Activated naive CD4-positive, alpha-beta T cell treated with anti-CD3 and anti-CD28 coated beads for 36 hours (primary cell): ENCODE measurements at regions of chr22 and their contacts with region 1.

Region 1: DNA sequence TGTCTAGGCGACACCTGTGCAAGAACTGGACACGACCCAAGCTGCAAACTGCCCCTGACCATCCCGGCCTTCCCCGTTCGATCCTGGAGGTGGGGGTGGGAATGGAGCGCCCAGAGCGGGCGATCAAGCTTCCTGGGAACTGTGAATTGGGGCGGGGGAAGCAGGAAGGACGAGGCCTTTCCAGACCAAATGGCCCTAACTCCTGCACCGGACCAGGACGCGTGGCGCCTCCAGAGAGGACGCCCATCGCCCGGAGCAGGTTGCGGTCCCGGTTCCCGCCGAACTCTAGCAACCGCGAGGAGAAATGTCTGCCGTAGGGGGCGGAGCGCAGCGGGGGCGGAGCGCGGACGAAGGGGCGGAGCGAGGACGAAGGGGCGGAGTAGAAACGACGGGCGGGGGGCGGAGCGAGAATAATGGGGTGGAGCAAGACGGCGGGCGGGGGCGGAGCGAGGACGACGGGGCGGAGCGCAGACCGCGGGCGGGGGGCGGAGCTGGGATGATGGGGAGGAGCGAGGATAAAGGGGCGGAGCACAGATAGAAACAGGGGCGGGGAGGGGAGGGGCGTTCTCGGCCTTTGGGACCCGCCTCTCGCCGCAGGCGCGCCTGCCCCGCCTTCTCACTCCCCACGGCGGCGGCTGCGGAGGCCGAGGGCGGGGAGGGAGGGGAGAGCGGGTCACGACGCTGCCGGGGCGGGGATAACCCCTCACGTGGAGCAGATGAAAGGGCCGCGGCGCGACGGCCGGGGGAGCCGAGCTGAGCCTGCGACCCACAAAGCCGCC is at the start of gene ZNRF3:
- DNase-seq: peak; percentile 92
- H3K4me3 Mint-ChIP-seq: peak within 1 kb of the TSS; percentile 81
- H3K27ac Mint-ChIP-seq: no peak within 1 kb of the TSS
- H3K4me1 Mint-ChIP-seq: peaks cover 19% of the 10 kb centered on the region
- H3K27me3 Mint-ChIP-seq: peaks cover 17% of the 10 kb centered on the region
- total RNA-seq, gene ZNRF3: 1.6 to 2.2 TPM

Region 2: GRCh38 chr22:28810821-28811491 is 72.1 kb before region 1 on chr22:
- CTCF ChIA-PET with region 1: no interaction called
- intact Hi-C with region 1: loop called (anchors 5 kb)
- DNase-seq: peak; percentile 66
- H3K4me3 Mint-ChIP-seq: peak overlapping the region; percentile 54
- H3K27ac Mint-ChIP-seq: peak overlapping the region; percentile 53
- H3K4me1 Mint-ChIP-seq: peaks cover 61% of the 10 kb centered on the region
- H3K27me3 Mint-ChIP-seq: no peaks in the 10 kb centered on the region

Region 3: GRCh38 chr22:28855355-28856094 is 27.5 kb before region 1 on chr22:
- CTCF ChIA-PET with region 1: no interaction called
- intact Hi-C with region 1: no loop called
- DNase-seq: peak; percentile 64
- H3K4me3 Mint-ChIP-seq: no peak overlapping the region
- H3K27ac Mint-ChIP-seq: no peak overlapping the region
- H3K4me1 Mint-ChIP-seq: no peaks in the 10 kb centered on the region
- H3K27me3 Mint-ChIP-seq: peaks cover 2% of the 10 kb centered on the region

Region 4: GRCh38 chr22:28907311-28908008 is 24.4 kb after region 1 on chr22:
- CTCF ChIA-PET with region 1: interaction called, 3 read pairs
- intact Hi-C with region 1: loop called (anchors 1 kb)
- DNase-seq: peak; percentile 83
- H3K4me3 Mint-ChIP-seq: no peak overlapping the region
- H3K27ac Mint-ChIP-seq: peak overlapping the region; percentile 86
- H3K4me1 Mint-ChIP-seq: peaks cover 46% of the 10 kb centered on the region
- H3K27me3 Mint-ChIP-seq: peaks cover 27% of the 10 kb centered on the region

Region 5: DNA sequence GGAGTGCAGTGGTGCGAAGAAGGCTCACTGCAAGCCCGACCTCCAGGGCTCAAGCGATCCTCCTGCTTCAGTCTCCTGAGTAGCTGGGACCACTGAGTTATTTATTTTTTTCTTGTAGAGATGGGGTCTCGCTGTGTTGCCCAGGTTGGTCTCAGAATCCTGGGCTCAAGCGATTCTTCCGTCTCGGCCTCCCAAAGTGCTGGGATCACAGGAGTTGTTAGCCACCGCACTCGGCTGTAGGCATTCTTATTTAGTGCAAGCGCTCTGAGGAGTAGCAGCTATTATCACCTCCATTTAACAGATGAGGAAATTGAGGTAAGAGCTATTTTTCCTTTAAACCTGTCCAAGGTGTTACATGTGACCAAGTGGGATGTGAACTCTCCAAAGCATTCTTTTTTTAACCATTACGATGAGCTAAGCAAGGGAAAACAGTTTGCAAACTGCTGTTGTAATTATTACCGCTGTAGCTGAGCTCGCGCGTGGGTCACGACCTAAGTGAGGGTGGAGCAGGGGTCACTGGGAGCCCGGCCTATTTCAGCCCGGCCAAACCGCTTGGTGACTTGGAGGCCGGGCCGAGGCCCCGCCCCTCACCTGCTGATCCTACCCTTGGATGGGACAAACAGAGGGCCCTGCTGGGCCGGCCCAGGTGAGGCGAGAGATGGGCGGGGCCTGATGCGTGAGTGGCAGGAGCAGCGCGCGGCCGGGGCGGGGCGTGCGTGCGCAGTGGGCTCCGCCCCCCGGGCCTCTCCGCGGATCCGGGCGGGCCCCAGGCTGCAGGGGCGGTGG is 189.3 kb after region 1 on chr22:
- CTCF ChIA-PET with region 1: no interaction called
- intact Hi-C with region 1: loop called (anchors 1 kb)
- DNase-seq: peak; percentile 87
- H3K4me3 Mint-ChIP-seq: peak overlapping the region; percentile 65
- H3K27ac Mint-ChIP-seq: no peak overlapping the region
- H3K4me1 Mint-ChIP-seq: peaks cover 20% of the 10 kb centered on the region
- H3K27me3 Mint-ChIP-seq: peaks cover 49% of the 10 kb centered on the region

Region 6: DNA sequence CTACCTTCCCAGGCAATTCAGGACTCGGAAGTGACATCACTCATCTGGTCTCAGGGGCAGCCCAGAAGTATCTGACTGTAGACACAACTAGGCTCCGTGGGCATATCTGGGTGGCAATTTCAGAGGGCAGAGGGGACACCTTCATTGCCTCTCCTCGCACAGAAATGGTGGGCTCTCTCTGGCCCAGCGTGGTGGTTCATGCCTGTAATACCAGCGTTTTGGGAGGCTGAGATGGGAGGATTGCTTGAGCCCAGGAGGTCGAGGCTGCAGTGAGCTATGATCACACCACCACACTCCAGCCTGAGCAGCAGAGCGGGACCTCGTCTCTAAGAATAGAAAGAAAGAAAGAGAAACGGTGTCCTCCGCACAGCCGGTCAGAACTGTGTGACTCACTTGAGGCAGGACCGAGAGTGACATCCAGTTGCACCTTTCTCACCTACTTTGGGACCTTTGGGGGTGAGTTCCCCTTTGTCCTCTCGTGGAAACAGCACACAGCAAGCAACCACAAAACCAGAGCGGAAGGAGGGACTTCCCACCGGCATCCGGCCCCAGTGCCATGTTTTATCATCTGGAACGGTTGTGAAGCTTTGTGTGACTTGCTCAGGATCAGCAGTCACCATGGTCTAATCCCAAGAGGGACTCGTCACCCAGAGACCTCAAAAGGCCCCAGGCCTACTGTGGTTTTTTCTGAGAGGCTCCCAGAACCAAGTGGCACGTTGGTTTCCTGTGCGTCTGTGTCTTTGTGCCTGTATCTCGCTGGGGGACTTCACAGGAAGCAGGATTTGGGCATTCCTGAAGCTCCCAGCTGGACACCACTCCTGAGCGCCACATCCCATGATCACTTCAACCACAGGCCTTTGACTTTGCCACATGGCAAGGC is 284.2 kb after region 1 on chr22:
- CTCF ChIA-PET with region 1: no interaction called
- intact Hi-C with region 1: loop called (anchors 1 kb)
- DNase-seq: peak; percentile 88
- H3K4me3 Mint-ChIP-seq: no peak overlapping the region
- H3K27ac Mint-ChIP-seq: peak overlapping the region; percentile 61
- H3K4me1 Mint-ChIP-seq: peaks cover 17% of the 10 kb centered on the region
- H3K27me3 Mint-ChIP-seq: peaks cover 16% of the 10 kb centered on the region

Region 7: GRCh38 chr22:29267858-29268417 is 384.9 kb after region 1 on chr22 and contains the starts of genes EWSR1 and RHBDD3:
- CTCF ChIA-PET with region 1: no interaction called
- intact Hi-C with region 1: loop called (anchors 2 kb)
- DNase-seq: peak; percentile 94
- H3K4me3 Mint-ChIP-seq: peak within 1 kb of the TSS; percentile 99
- H3K27ac Mint-ChIP-seq: peak within 1 kb of the TSS; percentile 100
- H3K4me1 Mint-ChIP-seq: peaks cover 39% of the 10 kb centered on the region
- H3K27me3 Mint-ChIP-seq: no peaks in the 10 kb centered on the region
- total RNA-seq, gene EWSR1: 274 to 303 TPM
- total RNA-seq, gene RHBDD3: 17.6 to 20.5 TPM